H1 (cell line): ENCODE measurements at regions of chr10 and their contacts with region 1.

Region 1: GRCh38 chr10:133139551-133140065 is 20.4 kb upstream of the KNDC1 start:
- DNase-seq: peak in 1 of 2 experiments; percentile 56
- H3K4me3 ChIP-seq: no peak overlapping the region
- H3K27ac ChIP-seq: no peak overlapping the region
- H3K4me1 ChIP-seq: peaks cover 0 to 3% (median 2%) of the 10 kb centered on the region in 4 experiments; a peak in 6 of 7 replicates
- H3K27me3 ChIP-seq: no peaks in the 10 kb centered on the region
- CTCF ChIP-seq: no peak
- EP300 ChIP-seq: no peak
- POLR2A ChIP-seq: no peak
- RAD21 ChIP-seq: no peak

Region 2: GRCh38 chr10:133159950-133160819 is 20.6 kb after region 1 on chr10 and contains the start of gene KNDC1:
- CTCF ChIA-PET with region 1: interaction called, 20 read pairs
- POLR2A ChIA-PET with region 1: interaction called, 6 read pairs
- DNase-seq: no peak
- H3K4me3 ChIP-seq: peak within 1 kb of the TSS; percentile 53 to 94 (median 63)
- H3K27ac ChIP-seq: no peak within 1 kb of the TSS
- H3K4me1 ChIP-seq: peaks cover 3 to 51% (median 23%) of the 10 kb centered on the region in 4 experiments
- H3K27me3 ChIP-seq: peaks cover 0 to 3% (median 0%) of the 10 kb centered on the region in 4 experiments; a peak in 2 of 7 replicates
- CTCF ChIP-seq: no peak
- EP300 ChIP-seq: no peak
- POLR2A ChIP-seq: no peak
- RAD21 ChIP-seq: no peak
- total RNA-seq, gene KNDC1: 16.7 and 19.3 TPM in 2 replicates

Region 3: GRCh38 chr10:133204226-133205015 is 64.8 kb after region 1 on chr10:
- CTCF ChIA-PET with region 1: interaction called, 11 read pairs
- POLR2A ChIA-PET with region 1: no interaction called
- DNase-seq: no peak
- H3K4me3 ChIP-seq: no peak overlapping the region
- H3K27ac ChIP-seq: no peak overlapping the region
- H3K4me1 ChIP-seq: no peaks in the 10 kb centered on the region
- H3K27me3 ChIP-seq: no peaks in the 10 kb centered on the region; a peak in 1 of 7 replicates
- CTCF ChIP-seq: no peak
- EP300 ChIP-seq: no peak
- POLR2A ChIP-seq: no peak
- RAD21 ChIP-seq: no peak

Region 4: GRCh38 chr10:133230387-133231195 is 91.0 kb after region 1 on chr10:
- CTCF ChIA-PET with region 1: interaction called, 12 read pairs
- POLR2A ChIA-PET with region 1: no interaction called
- DNase-seq: no peak
- H3K4me3 ChIP-seq: peak overlapping the region; percentile 20 to 63 (median 38); a peak in 6 of 8 replicates
- H3K27ac ChIP-seq: no peak overlapping the region
- H3K4me1 ChIP-seq: peaks cover 0 to 28% (median 12%) of the 10 kb centered on the region in 4 experiments; a peak in 6 of 7 replicates
- H3K27me3 ChIP-seq: peaks cover 22 to 39% (median 36%) of the 10 kb centered on the region in 4 experiments
- CTCF ChIP-seq: no peak
- EP300 ChIP-seq: no peak
- POLR2A ChIP-seq: no peak
- RAD21 ChIP-seq: no peak

Region 5: GRCh38 chr10:133294189-133294588 is 154.6 kb after region 1 on chr10:
- CTCF ChIA-PET with region 1: no interaction called
- POLR2A ChIA-PET with region 1: no interaction called
- DNase-seq: no peak
- H3K4me3 ChIP-seq: no peak overlapping the region
- H3K27ac ChIP-seq: no peak overlapping the region
- H3K4me1 ChIP-seq: no peaks in the 10 kb centered on the region
- H3K27me3 ChIP-seq: no peaks in the 10 kb centered on the region
- CTCF ChIP-seq: no peak
- EP300 ChIP-seq: no peak
- POLR2A ChIP-seq: no peak
- RAD21 ChIP-seq: no peak

Region 6: GRCh38 chr10:133335246-133336117 is 195.9 kb after region 1 on chr10:
- CTCF ChIA-PET with region 1: no interaction called
- POLR2A ChIA-PET with region 1: no interaction called
- DNase-seq: peak in 1 of 2 experiments; percentile 83
- H3K4me3 ChIP-seq: peak overlapping the region; percentile 7 to 58 (median 32); a peak in 7 of 8 replicates
- H3K27ac ChIP-seq: no peak overlapping the region
- H3K4me1 ChIP-seq: peaks cover 0 to 18% (median 4%) of the 10 kb centered on the region in 4 experiments; a peak in 5 of 7 replicates
- H3K27me3 ChIP-seq: peaks cover 27 to 61% (median 57%) of the 10 kb centered on the region in 4 experiments
- CTCF ChIP-seq: no peak
- EP300 ChIP-seq: no peak
- POLR2A ChIP-seq: no peak
- RAD21 ChIP-seq: no peak